ENCODE measurements at regions of chr11 and their contacts with region 1.

Region 1: DNA sequence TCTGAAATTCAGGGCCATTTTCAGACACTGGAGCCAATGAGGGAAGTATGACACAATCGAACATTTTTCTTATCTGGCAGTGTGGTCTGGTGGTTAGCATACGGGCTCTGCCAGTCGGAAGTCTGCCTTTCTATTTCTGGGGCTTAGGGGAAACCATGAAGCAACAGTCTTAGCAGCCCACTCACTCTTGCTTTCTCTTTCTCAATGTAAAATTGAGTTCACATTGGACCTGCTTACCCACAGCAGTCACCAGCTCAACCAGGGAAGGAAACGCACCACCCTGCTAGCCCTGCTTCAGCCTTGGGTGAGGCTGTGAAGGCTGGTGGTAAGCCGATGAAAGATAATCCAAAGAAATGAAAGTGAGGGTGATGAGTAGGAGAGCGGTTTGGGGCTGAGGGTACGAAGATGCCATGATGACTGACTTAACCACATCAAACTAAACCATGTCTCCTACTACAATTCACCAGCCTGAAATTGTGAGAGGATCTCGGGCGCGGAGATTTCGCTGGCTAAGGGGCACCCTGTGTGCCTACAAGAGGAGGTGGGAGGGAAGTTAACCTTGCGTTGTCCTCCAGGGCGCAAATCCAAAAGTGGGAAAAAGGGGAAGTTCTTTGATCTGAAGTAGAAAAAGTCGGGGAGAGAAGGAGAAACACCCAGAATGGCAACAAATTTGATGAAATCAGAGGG is 2.0 kb upstream of the LMO2 start:
- DNase-seq: peak; percentile 38
- H3K4me3 Mint-ChIP-seq: no peak overlapping the region
- H3K27ac Mint-ChIP-seq: peak overlapping the region; percentile 16
- H3K4me1 Mint-ChIP-seq: peaks cover 22% of the 10 kb centered on the region
- H3K27me3 Mint-ChIP-seq: peaks cover 64% of the 10 kb centered on the region

Region 2: GRCh38 chr11:33015621-33016551 is 878.0 kb before region 1 on chr11 and contains the start of gene DEPDC7:
- intact Hi-C with region 1: loop called (anchors 5 kb)
- DNase-seq: peak; percentile 66
- H3K4me3 Mint-ChIP-seq: peak within 1 kb of the TSS; percentile 79
- H3K27ac Mint-ChIP-seq: no peak within 1 kb of the TSS
- H3K4me1 Mint-ChIP-seq: peaks cover 18% of the 10 kb centered on the region
- H3K27me3 Mint-ChIP-seq: peaks cover 41% of the 10 kb centered on the region
- total RNA-seq, gene DEPDC7: 0.26 and 0.61 TPM in 2 replicates

Region 3: DNA sequence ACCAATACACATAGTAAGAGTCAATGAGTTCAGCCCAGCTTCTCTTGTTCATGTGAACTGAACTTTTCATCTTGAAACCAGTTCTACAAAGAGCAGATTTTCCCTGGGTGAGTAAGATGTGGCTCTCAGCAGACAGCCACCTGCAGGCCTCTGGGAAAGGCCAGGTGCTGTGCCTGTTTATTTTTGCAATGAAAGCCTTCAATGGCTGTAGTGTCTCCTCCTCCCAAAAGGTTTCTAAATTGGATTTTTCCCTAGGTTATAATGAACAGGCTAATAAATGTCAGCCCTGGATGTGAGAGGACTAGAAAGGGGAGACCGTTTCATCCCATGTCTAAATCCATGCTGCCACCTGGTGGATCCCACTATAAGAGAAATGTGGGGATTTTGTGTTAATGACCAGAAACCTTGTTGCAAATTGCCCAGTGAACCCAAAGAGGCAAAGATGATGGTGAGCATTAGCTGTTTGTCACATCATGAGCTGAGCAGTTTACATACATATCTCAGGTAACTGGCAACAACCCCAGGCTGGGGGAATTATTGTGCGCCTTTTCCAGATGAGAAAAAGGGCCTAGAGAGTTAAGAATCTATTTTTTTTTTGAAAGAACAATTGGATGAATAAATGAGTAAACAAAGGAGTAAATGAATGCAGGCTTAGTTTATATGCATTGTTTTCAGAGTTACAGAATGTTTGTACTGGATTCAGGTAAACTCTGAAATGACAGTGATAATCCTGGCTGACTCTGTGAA is 205.9 kb before region 1 on chr11:
- intact Hi-C with region 1: no loop called
- DNase-seq: no peak
- H3K4me3 Mint-ChIP-seq: no peak overlapping the region
- H3K27ac Mint-ChIP-seq: no peak overlapping the region
- H3K4me1 Mint-ChIP-seq: no peaks in the 10 kb centered on the region
- H3K27me3 Mint-ChIP-seq: peaks cover 9% of the 10 kb centered on the region

Region 4: DNA sequence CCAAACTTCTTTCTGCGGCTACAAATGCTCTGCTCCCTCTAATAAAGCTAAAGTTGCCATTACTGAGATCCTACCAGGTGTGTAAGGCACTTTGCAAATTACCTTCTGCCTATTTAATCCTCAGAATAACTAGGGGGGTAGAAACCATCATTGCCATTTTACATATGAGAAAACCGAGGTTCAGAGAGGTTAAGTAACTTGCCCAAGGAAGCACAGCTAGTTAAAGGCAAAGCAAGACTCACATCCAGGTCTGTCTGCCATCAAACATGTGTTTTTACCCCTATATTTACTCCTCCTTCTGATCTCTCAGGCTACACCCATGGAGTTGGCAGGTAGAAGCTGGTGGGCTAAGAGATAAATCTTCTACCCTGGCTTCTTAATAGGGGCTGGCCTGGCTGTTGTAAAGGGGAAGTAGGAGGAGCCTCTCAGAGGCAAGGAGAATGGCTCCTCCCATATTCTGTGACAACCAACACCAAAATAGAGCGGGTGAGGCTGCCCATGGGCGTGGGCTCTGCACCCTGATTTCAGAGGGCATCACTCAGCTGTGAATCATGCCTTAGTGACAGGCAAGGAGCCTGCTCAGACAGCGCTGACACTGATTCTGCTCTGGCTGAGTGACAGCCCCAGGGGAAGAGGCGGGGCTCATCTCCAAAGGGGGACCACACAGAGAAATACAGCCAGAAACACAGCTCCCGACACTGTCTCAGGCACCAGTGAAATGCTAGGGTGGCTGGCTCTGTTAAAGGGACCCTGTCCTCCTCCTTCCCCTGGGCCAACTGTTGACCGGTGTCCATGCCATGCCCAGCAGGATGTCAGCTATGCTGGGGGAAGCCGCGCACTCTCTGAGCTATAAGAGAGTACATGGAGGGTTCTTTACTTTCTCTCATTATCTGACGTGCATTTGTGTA is 357.1 kb after region 1 on chr11:
- intact Hi-C with region 1: loop called (anchors 2 kb)
- DNase-seq: peak; percentile 38
- H3K4me3 Mint-ChIP-seq: peak overlapping the region; percentile 52
- H3K27ac Mint-ChIP-seq: peak overlapping the region; percentile 6
- H3K4me1 Mint-ChIP-seq: peaks cover 63% of the 10 kb centered on the region
- H3K27me3 Mint-ChIP-seq: peaks cover 13% of the 10 kb centered on the region

Measured in activated T-helper 1 cell treated with anti-CD3 and anti-CD28 coated beads, Interleukin-12 subunit alpha, Interleukin-12 subunit beta, Interleukin-2, Interleukin-4 antibody, amounts not matched to agents 30 ng/mL and 10 ng/mL and 1 ng/mL, durations not matched to agents 14 hours and 24 hours and 36 hours (primary cell).